BJ (cell line): ENCODE measurements at regions of chr13 and their contacts with region 1.

Region 1: GRCh38 chr13:24220086-24220703 is 59.7 kb downstream of the SPATA13 start:
- DNase-seq: no peak
- H3K4me3 ChIP-seq: no peak overlapping the region
- H3K27me3 ChIP-seq: no peaks in the 10 kb centered on the region
- CTCF ChIP-seq: peak; percentile 67

Region 2: DNA sequence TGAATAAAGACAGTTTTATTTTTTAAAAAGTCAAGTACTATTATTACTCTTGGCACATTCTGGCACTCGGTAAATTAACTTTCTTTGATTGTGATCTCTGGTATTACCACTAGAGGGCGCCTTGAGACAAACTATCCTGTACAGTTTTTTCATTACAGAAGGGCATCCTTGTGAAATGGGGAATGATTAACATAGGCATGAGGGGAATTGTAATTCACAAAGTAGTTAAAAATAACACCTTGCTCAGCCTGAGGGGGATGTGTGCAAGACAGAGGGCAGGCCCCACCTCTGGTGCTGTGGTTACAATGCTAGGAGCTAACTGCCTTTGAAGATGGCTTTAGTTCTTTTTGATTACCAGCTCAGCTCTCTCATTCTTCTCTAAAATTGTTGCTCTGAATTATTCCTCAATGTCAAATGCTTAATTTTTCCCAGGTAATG is 298.7 kb before region 1 on chr13:
- CTCF ChIA-PET with region 1: interaction called, 15 read pairs
- POLR2A ChIA-PET with region 1: no interaction called
- DNase-seq: no peak
- H3K4me3 ChIP-seq: no peak overlapping the region
- H3K27me3 ChIP-seq: no peaks in the 10 kb centered on the region
- CTCF ChIP-seq: peak; percentile 64

Region 3: DNA sequence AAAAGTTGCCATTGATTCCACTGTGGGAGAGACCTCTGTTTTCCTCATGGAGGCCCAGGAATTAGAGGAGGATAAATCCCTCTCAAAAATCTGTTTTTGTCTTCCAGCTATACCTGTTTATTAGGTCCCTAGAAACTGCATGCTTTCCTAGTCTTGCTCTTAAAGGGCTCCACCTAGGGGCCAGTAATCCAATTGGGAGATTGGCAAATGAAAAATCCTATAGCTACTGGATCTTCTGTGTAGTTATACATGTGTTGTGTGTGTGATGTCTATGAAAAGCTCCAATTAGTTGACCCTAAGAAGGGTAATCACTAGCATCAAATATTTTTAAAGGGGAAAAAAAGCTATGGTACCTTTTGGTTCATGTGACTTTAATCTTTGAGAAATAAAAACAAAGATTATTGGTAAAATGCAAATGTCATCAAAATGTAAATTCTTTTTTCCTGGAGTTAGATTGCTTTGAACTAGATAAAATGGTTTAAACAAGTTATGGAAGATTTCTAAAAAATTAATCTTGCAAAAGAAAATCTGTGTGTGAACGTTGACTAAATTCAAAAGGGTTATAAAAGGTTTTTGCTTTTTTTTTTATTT is 259.5 kb before region 1 on chr13:
- CTCF ChIA-PET with region 1: interaction called, 12 read pairs
- POLR2A ChIA-PET with region 1: no interaction called
- DNase-seq: no peak
- H3K4me3 ChIP-seq: no peak overlapping the region
- H3K27me3 ChIP-seq: no peaks in the 10 kb centered on the region; the same call in none of the 2 replicates
- CTCF ChIP-seq: peak; percentile 85

Region 4: DNA sequence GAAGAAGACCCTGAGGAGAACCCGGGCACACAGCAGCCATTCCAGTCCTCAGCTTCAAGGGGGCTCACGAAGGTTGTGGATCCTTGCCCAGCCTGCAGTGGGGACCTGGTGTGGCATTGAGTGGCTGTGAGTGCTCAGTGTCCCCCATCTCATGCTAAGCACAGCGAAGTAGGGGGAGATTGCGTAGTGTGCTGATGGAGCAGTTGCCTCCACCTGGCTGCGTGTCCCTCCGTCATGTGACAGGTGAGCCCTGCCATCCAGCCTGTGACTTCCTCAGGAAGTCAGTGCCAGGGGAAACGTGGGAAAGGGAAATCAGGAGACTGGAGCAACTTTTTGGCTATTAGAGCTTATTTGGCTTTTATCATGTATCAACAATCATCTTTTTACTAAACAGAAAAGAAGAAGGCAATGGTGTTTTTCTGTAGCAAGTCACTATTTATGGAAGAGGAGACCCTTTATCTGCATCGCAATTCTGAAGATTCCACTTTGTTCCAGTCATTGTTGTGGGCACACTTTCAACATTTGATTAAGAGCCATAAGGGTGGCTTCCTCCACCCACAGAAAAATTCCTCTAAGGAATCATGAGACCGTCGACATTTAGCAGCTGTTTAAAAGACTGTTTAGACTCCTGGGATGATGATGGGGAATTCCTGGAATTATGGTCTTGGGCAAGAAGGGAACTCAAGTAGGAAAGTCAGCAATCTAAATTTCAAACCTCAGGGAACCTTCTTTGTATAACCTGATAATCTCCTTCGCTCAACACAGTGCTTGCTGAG is 186.5 kb before region 1 on chr13:
- CTCF ChIA-PET with region 1: interaction called, 17 read pairs
- POLR2A ChIA-PET with region 1: no interaction called
- DNase-seq: peak; percentile 59
- H3K4me3 ChIP-seq: no peak overlapping the region
- H3K27me3 ChIP-seq: no peaks in the 10 kb centered on the region
- CTCF ChIP-seq: no peak

Region 5: GRCh38 chr13:24053519-24054251 is 166.5 kb before region 1 on chr13:
- CTCF ChIA-PET with region 1: interaction called, 60 read pairs
- POLR2A ChIA-PET with region 1: no interaction called
- DNase-seq: no peak
- H3K4me3 ChIP-seq: no peak overlapping the region
- H3K27me3 ChIP-seq: no peaks in the 10 kb centered on the region
- CTCF ChIP-seq: peak; percentile 79

Region 6: GRCh38 chr13:24313439-24313838 is 93.2 kb after region 1 on chr13:
- CTCF ChIA-PET with region 1: no interaction called
- POLR2A ChIA-PET with region 1: no interaction called
- DNase-seq: no peak
- H3K4me3 ChIP-seq: no peak overlapping the region
- H3K27me3 ChIP-seq: 0 out of 2 replicates have a peak, but pooled peaks cover 3% of the 10 kb centered on the region
- CTCF ChIP-seq: peak; percentile 26; the same call in 1 of the 2 replicates